Activated naive CD4-positive, alpha-beta T cell treated with anti-CD3 and anti-CD28 coated beads for 36 hours (primary cell): ENCODE measurements at regions of chr19 and their contacts with region 1.

Region 1: GRCh38 chr19:9785367-9786331 is 17.1 kb upstream of the ZNF846 start:
- DNase-seq: peak; percentile 100
- H3K4me3 Mint-ChIP-seq: peak overlapping the region; percentile 93
- H3K27ac Mint-ChIP-seq: peak overlapping the region; percentile 94
- H3K4me1 Mint-ChIP-seq: peaks cover 25% of the 10 kb centered on the region
- H3K27me3 Mint-ChIP-seq: no peaks in the 10 kb centered on the region

Region 2: DNA sequence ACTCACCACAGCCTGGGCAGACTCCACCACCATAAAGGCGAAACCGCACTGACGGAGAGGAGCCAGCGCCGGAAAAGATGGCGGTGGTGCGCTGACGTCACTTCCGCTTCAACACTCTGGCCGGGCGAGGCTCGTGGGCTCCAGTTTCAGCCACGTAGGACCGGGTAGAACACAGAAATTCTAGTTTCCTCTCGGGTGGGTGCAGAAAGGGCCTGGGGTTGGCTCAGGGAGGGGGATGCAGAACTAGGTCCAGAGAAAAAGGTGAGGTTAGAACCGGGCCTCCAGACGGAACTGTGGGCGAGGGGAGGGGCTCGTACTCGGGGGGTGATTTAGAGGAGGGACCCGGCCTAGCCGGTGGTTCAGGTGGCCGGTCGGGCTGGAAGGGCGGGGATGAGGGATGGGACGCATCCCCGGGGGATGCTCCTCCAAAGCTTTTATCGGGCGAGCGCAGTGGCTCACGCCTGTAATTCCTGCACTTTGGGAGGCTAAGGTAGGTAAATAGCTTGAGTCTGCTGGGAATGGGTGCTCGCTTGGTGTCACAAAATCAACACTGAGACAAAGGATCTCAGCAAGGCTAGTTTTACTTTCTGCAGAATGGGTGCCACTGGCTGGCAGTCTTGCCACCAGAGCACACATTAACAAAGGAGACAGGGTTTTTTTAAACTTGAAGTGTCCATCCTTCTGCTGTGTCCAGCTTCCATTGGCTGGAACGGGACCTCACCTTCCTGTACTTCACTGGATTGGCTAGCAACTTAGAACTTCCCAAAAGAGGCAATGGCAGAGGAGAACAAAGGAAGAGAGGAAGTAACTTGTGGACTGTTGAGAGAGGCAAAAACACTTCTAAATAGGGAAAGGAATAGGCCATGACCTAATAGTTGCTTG is 164.3 kb before region 1 on chr19 and contains the start of gene ZNF561:
- CTCF ChIA-PET with region 1: interaction called, 8 read pairs
- intact Hi-C with region 1: loop called (anchors 1 kb)
- DNase-seq: peak; percentile 90
- H3K4me3 Mint-ChIP-seq: peak within 1 kb of the TSS; percentile 98
- H3K27ac Mint-ChIP-seq: peak within 1 kb of the TSS; percentile 99
- H3K4me1 Mint-ChIP-seq: peaks cover 18% of the 10 kb centered on the region
- H3K27me3 Mint-ChIP-seq: no peaks in the 10 kb centered on the region
- total RNA-seq, gene ZNF561: 28.7 to 29.4 TPM

Region 3: GRCh38 chr19:9757544-9758501 is 27.8 kb before region 1 on chr19:
- CTCF ChIA-PET with region 1: no interaction called
- intact Hi-C with region 1: no loop called
- DNase-seq: no peak
- H3K4me3 Mint-ChIP-seq: no peak overlapping the region
- H3K27ac Mint-ChIP-seq: no peak overlapping the region
- H3K4me1 Mint-ChIP-seq: no peaks in the 10 kb centered on the region
- H3K27me3 Mint-ChIP-seq: no peaks in the 10 kb centered on the region